Uterus (tissue), 4 donors: ENCODE measurements at regions of chr15 and their contacts with region 1.

Region 1: GRCh38 chr15:60444289-60444912 is 34.5 kb downstream of the ICE2 start:
- DNase-seq: no peak
- H3K4me3 ChIP-seq: no peak overlapping the region
- H3K27ac ChIP-seq: no peak overlapping the region
- H3K4me1 ChIP-seq: no peaks in the 10 kb centered on the region
- H3K27me3 ChIP-seq: no peaks in the 10 kb centered on the region
- CTCF ChIP-seq: peak; percentile 56 to 72 (median 65)
- POLR2A ChIP-seq: no peak

Region 2: GRCh38 chr15:60362321-60363086 is 81.9 kb before region 1 on chr15:
- intact Hi-C with region 1: loop called (anchors 10 kb)
- DNase-seq: no peak
- H3K4me3 ChIP-seq: no peak overlapping the region
- H3K27ac ChIP-seq: peak overlapping the region; percentile 42 to 53
- H3K4me1 ChIP-seq: peaks cover 0 to 5% of the 10 kb centered on the region in 2 donors
- H3K27me3 ChIP-seq: no peaks in the 10 kb centered on the region
- CTCF ChIP-seq: no peak
- POLR2A ChIP-seq: no peak